MCF 10A (cell line): ENCODE measurements at regions of chr2 and their contacts with region 1.

Region 1: GRCh38 chr2:218710687-218711549 is at the start of gene TTLL4:
- DNase-seq: peak; percentile 97
- H3K4me3 Mint-ChIP-seq: peak within 1 kb of the TSS; percentile 98
- H3K27ac Mint-ChIP-seq: peak within 1 kb of the TSS; percentile 92
- H3K4me1 Mint-ChIP-seq: peaks cover 15% of the 10 kb centered on the region
- H3K27me3 Mint-ChIP-seq: no peaks in the 10 kb centered on the region
- CTCF ChIP-seq: peak; percentile 70
- total RNA-seq, gene TTLL4: 33.6 and 38.2 TPM in 2 replicates

Region 2: DNA sequence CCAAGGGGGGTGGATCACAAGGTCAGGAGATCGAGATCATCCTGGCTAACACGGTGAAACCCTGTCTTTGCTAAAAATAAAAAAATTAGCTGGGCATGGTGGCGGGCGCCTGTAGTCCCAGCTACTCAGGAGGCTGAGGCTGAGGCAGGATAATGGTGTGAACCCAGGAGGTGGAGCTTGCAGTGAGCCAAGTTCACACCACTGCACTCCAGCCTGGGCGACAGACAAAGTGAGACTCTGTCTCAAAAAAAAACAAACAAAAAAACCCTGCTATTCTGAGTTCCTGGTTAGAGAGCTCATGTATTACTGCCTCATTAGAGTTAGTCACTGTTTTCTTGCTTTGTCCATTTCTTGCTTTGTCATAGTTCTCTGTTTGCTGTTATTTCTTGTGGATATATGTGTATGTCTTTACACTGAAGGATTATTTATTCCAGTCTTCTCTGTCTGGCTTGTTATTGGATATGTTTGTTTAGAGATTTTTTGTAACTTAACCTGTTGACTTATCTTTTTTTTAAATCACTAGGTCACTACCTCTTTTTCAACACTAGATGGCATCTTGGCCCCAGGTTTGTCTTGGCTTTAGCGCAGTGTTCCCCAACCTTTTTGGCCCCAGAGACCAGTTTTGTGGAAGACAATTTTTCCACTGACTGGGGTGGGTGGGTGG is 16.7 kb after region 1 on chr2:
- CTCF ChIA-PET with region 1: interaction called, 21 read pairs
- POLR2A ChIA-PET with region 1: interaction called, 19 read pairs
- intact Hi-C with region 1: loop called (anchors 2 kb)
- DNase-seq: peak; percentile 40
- H3K4me3 Mint-ChIP-seq: no peak overlapping the region
- H3K27ac Mint-ChIP-seq: no peak overlapping the region
- H3K4me1 Mint-ChIP-seq: peaks cover 21% of the 10 kb centered on the region
- H3K27me3 Mint-ChIP-seq: no peaks in the 10 kb centered on the region
- CTCF ChIP-seq: peak; percentile 48

Region 3: GRCh38 chr2:218733171-218734021 is 22.5 kb after region 1 on chr2:
- CTCF ChIA-PET with region 1: interaction called, 21 read pairs
- POLR2A ChIA-PET with region 1: interaction called, 19 read pairs
- intact Hi-C with region 1: loop called (anchors 2 kb)
- DNase-seq: peak; percentile 91
- H3K4me3 Mint-ChIP-seq: peak overlapping the region; percentile 38
- H3K27ac Mint-ChIP-seq: peak overlapping the region; percentile 83
- H3K4me1 Mint-ChIP-seq: peaks cover 37% of the 10 kb centered on the region
- H3K27me3 Mint-ChIP-seq: no peaks in the 10 kb centered on the region
- CTCF ChIP-seq: no peak

Region 4: GRCh38 chr2:218814540-218815243 is 103.8 kb after region 1 on chr2:
- CTCF ChIA-PET with region 1: interaction called, 11 read pairs
- POLR2A ChIA-PET with region 1: interaction called, 4 read pairs
- intact Hi-C with region 1: no loop called
- DNase-seq: no peak
- H3K4me3 Mint-ChIP-seq: no peak overlapping the region
- H3K27ac Mint-ChIP-seq: no peak overlapping the region
- H3K4me1 Mint-ChIP-seq: peaks cover 6% of the 10 kb centered on the region
- H3K27me3 Mint-ChIP-seq: peaks cover 19% of the 10 kb centered on the region
- CTCF ChIP-seq: no peak